WTC11 (cell line): ENCODE measurements at regions of chr1 and their contacts with region 1.

Region 1: GRCh38 chr1:201792534-201793305 is 36.2 kb upstream of the IPO9 start:
- DNase-seq: peak; percentile 85
- ATAC-seq: peak; percentile 96
- H3K4me3 Mint-ChIP-seq: no peak overlapping the region
- H3K27ac Mint-ChIP-seq: no peak overlapping the region
- H3K4me1 Mint-ChIP-seq: no peaks in the 10 kb centered on the region
- H3K27me3 Mint-ChIP-seq: no peaks in the 10 kb centered on the region
- CTCF ChIP-seq: peak; percentile 82

Region 2: GRCh38 chr1:201538612-201539551 is 253.8 kb before region 1 on chr1 and contains the start of gene NAV1:
- CTCF ChIA-PET with region 1: interaction called, 87 read pairs
- POLR2A ChIA-PET with region 1: no interaction called
- DNase-seq: peak; percentile 65
- ATAC-seq: peak; percentile 63
- H3K4me3 Mint-ChIP-seq: peak within 1 kb of the TSS; percentile 88
- H3K27ac Mint-ChIP-seq: no peak within 1 kb of the TSS
- H3K4me1 Mint-ChIP-seq: peaks cover 32% of the 10 kb centered on the region
- H3K27me3 Mint-ChIP-seq: peaks cover 64% of the 10 kb centered on the region
- CTCF ChIP-seq: no peak
- total RNA-seq, gene NAV1: 41.0 to 51.0 TPM (median 46.2 TPM) in 3 replicates

Region 3: GRCh38 chr1:201566933-201567801 is 225.6 kb before region 1 on chr1:
- CTCF ChIA-PET with region 1: interaction called, 60 read pairs
- POLR2A ChIA-PET with region 1: no interaction called
- DNase-seq: no peak
- ATAC-seq: peak; percentile 28; the same call in 1 of the 2 replicates
- H3K4me3 Mint-ChIP-seq: no peak overlapping the region
- H3K27ac Mint-ChIP-seq: no peak overlapping the region
- H3K4me1 Mint-ChIP-seq: peaks cover 7% of the 10 kb centered on the region; the same call in 1 of the 2 replicates
- H3K27me3 Mint-ChIP-seq: no peaks in the 10 kb centered on the region; the same call in 1 of the 2 replicates
- CTCF ChIP-seq: no peak

Region 4: DNA sequence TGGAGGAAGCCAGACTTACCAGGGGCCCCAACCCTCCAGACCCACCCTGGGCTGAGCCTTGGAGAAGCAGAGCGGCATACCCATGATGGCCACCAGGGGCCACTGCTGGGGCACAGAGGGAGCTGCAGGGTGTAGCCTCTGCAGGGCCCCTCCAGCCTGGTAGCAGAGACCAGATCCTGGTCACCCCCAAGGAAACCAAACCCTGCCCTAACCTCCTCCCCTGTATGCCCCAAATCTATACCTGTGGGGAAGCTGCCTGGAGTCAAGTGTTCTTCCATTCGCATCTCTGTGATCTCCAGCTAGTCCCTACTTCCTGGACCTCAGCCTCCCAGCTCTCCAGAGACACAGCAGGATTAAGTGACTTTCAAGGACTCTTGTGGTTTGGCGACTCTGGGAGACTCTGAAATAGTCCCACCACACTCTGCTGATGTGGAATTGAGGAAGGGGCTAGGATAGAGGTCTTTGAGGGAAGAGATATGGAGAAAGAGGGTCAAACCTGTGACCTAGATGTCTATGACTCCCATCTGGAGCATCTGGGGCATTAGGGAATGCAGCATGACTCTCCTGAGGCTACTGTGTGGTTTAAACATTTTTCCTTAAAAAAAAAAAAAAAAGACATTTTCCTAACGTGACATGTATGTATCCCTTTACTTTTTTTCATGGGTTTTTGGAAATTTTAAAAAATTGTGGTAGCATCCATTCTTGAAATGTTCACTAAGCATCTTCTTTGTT is 83.0 kb before region 1 on chr1:
- CTCF ChIA-PET with region 1: interaction called, 378 read pairs
- POLR2A ChIA-PET with region 1: no interaction called
- DNase-seq: peak; percentile 87
- ATAC-seq: peak; percentile 98
- H3K4me3 Mint-ChIP-seq: no peak overlapping the region
- H3K27ac Mint-ChIP-seq: no peak overlapping the region
- H3K4me1 Mint-ChIP-seq: peaks cover 8% of the 10 kb centered on the region
- H3K27me3 Mint-ChIP-seq: no peaks in the 10 kb centered on the region
- CTCF ChIP-seq: peak; percentile 88

Region 5: GRCh38 chr1:201739492-201740085 is 53.1 kb before region 1 on chr1:
- CTCF ChIA-PET with region 1: interaction called, 133 read pairs
- POLR2A ChIA-PET with region 1: no interaction called
- DNase-seq: peak; percentile 76
- ATAC-seq: peak; percentile 62
- H3K4me3 Mint-ChIP-seq: peak overlapping the region; percentile 94
- H3K27ac Mint-ChIP-seq: peak overlapping the region; percentile 28; the same call in 1 of the 2 replicates
- H3K4me1 Mint-ChIP-seq: peaks cover 67% of the 10 kb centered on the region
- H3K27me3 Mint-ChIP-seq: no peaks in the 10 kb centered on the region; the same call in none of the 2 replicates
- CTCF ChIP-seq: no peak

Region 6: GRCh38 chr1:201766131-201766866 is 26.4 kb before region 1 on chr1:
- CTCF ChIA-PET with region 1: interaction called, 33 read pairs
- POLR2A ChIA-PET with region 1: no interaction called
- DNase-seq: no peak
- ATAC-seq: no peak
- H3K4me3 Mint-ChIP-seq: no peak overlapping the region
- H3K27ac Mint-ChIP-seq: no peak overlapping the region
- H3K4me1 Mint-ChIP-seq: peaks cover 23% of the 10 kb centered on the region
- H3K27me3 Mint-ChIP-seq: no peaks in the 10 kb centered on the region
- CTCF ChIP-seq: no peak

Region 7: DNA sequence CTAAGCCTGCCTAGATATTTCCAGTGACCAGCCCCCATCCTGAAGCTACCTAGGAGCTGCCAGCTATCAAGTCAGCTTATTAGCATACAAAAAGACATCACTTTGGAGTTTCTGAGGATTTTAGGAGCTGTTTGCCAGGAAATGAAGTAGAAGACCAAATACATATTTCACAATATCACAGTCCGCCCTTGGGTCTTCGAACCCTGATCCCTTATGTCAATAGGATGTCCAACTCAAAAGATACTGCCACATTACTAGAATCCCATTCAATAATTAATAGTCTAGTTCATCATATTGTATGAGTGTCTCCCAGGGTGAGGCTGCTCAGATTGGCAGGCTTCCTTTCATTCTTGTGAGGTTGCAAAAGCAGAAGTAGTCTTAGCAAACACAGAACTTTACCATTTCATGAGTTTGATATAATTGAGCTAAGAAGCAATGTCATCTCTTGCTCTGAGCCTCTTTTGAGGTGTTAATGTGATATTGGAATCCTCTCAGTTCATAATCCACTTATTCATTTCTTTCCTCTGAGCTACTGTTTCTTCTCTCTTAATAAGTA is 49.8 kb after region 1 on chr1:
- CTCF ChIA-PET with region 1: interaction called, 11 read pairs
- POLR2A ChIA-PET with region 1: no interaction called
- DNase-seq: no peak
- ATAC-seq: no peak
- H3K4me3 Mint-ChIP-seq: no peak overlapping the region
- H3K27ac Mint-ChIP-seq: peak overlapping the region; percentile 33
- H3K4me1 Mint-ChIP-seq: peaks cover 29% of the 10 kb centered on the region
- H3K27me3 Mint-ChIP-seq: no peaks in the 10 kb centered on the region
- CTCF ChIP-seq: no peak

Region 8: DNA sequence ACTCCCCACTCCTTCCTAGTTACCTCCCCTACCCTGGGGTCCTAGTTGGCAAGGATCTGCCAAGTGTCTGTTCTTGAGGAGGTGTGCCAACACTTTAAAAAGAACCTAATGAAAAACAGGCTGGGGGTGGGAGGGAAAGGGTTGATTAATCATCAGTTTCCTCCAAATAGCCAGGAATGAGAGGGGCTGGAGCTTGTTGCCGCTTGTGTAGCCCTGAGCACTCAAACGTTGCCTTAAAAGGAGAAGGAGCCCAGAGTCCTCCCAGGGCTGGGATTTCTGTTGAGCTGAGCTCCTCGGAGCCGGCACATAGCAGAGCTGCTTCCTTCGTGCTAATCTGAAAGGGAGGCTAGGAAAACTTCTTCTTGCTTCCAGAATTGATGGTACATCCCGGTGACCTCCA is 111.9 kb after region 1 on chr1:
- CTCF ChIA-PET with region 1: no interaction called
- POLR2A ChIA-PET with region 1: no interaction called
- DNase-seq: no peak
- ATAC-seq: peak; percentile 80
- H3K4me3 Mint-ChIP-seq: no peak overlapping the region
- H3K27ac Mint-ChIP-seq: 0 out of 2 replicates have a peak overlapping the region, but pooled peaks have one; percentile 48
- H3K4me1 Mint-ChIP-seq: no peaks in the 10 kb centered on the region
- H3K27me3 Mint-ChIP-seq: no peaks in the 10 kb centered on the region; the same call in 1 of the 2 replicates
- CTCF ChIP-seq: no peak

Region 9: GRCh38 chr1:202144402-202145067 is 351.8 kb after region 1 on chr1 and contains the start of gene ARL8A:
- CTCF ChIA-PET with region 1: no interaction called
- POLR2A ChIA-PET with region 1: no interaction called
- DNase-seq: peak; percentile 73
- ATAC-seq: peak; percentile 50
- H3K4me3 Mint-ChIP-seq: peak within 1 kb of the TSS; percentile 83
- H3K27ac Mint-ChIP-seq: peak within 1 kb of the TSS; percentile 71
- H3K4me1 Mint-ChIP-seq: peaks cover 16% of the 10 kb centered on the region
- H3K27me3 Mint-ChIP-seq: peaks cover 7% of the 10 kb centered on the region
- CTCF ChIP-seq: no peak
- total RNA-seq, gene ARL8A: 47.2 to 58.5 TPM (median 50.9 TPM) in 3 replicates